ENCODE measurements at regions of chr19 and their contacts with region 1.

Region 1: GRCh38 chr19:52690369-52691214 is 44.3 kb downstream of the ZNF611 start:
- DNase-seq: peak; percentile 95 to 97
- ATAC-seq: peak; percentile 99 to 100 (median 100)
- H3K4me3 ChIP-seq: peak overlapping the region; percentile 58 to 84 (median 66)
- H3K27ac ChIP-seq: peak overlapping the region; percentile 79 to 96 (median 92)
- H3K4me1 ChIP-seq: peaks cover 3 to 23% (median 17%) of the 10 kb centered on the region in 9 donors
- H3K27me3 ChIP-seq: no peaks in the 10 kb centered on the region
- CTCF ChIP-seq: peak; percentile 16 to 65 (median 42)

Region 2: DNA sequence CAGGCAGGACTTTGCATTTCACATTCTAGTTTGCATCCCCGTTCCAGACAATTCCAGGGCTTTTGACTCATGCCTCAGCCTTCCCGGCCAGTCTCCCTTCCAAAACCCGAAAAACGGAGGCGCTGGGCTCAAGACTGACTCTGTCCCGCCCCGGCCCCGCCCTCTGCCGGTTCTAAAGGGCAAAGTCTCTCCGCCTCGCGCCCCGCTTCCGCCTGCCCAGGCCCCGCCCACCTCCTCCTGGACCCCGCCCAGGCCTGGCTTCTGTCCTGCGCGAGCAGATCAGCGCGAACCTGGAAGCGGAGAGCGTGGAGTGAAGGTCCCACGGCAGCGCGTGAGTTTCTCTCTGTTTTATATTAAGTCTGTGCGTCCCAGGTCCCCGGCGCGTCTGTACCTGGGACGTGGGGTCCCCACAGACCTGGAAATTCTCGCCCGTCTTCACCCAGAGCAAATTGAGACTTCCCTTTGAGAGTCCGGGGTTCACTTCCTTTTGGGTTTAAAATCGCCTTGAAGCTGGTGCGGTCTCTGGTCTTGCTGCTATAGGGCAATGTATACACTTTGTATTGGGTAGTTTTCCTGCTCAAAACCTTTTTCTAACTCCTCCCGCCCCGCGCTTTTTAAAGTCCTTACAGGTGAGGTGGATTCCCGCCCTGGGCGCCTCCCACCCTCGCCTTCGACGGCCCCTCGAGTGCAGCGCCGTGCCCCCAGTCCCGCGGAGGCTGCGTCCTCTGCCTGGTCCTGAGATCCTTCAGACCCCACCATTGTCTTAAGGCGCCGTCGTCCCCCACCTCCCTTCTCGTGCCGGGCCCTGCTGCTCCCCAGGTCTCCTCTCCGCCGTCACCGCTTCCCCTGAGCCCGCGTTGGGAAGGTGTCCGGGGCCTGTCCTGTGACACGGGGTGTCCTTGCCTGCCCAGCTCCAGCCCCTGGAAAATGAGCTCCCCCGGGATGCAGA is 89.3 kb before region 1 on chr19:
- intact Hi-C with region 1: loop called in 1 of 10 experiments (anchors 10 kb)
- DNase-seq: peak; percentile 94 to 96
- ATAC-seq: peak; percentile 97 to 99 (median 99)
- H3K4me3 ChIP-seq: peak overlapping the region; percentile 57 to 82 (median 65)
- H3K27ac ChIP-seq: peak overlapping the region; percentile 9 to 84 (median 67)
- H3K4me1 ChIP-seq: peaks cover 5 to 18% (median 12%) of the 10 kb centered on the region in 9 donors
- H3K27me3 ChIP-seq: no peaks in the 10 kb centered on the region
- CTCF ChIP-seq: peak; percentile 9 to 68 (median 52)

Region 3: DNA sequence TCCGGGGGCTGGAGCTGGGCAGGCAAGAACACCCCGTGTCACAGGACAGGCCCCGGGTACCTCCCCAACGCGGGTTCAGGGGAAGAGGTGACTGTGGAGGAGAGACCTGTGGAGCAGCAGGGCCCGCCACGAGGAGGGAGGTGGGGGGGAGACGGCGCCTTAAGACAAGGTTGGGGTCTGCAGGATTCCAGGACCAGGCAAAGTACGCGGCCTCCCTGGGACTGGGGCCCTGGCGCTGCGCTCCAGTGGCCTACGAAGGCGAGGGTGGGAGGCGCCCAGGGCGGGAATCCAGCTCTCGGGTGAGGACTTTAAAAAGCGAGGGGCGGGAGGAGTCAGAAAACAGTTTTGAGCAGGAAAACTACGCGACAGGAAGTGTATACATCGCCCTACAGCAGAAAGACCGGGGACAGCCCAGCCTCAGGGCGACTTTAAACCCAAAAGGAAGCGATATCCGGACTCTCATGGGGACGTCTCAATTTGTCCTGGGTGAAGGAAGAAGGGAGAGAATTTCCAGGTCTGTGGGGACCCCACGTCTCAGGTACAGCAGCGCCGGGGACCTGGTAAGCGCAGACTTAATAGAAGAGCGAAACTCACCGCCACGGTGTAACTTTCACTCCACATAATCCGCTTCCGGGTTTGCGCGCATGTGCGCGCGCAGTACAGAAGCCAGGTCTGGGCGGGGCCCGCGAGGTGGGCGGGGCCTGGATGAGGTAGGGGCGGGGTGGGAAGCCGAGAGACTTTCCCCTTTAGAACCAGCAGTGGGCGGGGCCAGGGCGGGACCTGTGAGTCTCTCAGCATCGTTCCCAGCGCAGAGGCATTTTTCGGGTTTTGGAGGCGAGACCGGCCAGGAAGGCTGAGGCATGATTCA is 52.6 kb before region 1 on chr19 and contains the start of gene ZNF83:
- intact Hi-C with region 1: loop called in 2 of 10 experiments (anchors 5 kb)
- DNase-seq: peak; percentile 98
- ATAC-seq: peak; percentile 99 to 100 (median 99)
- H3K4me3 ChIP-seq: peak within 1 kb of the TSS; percentile 51 to 91 (median 74)
- H3K27ac ChIP-seq: peak within 1 kb of the TSS; percentile 66 to 94 (median 86)
- H3K4me1 ChIP-seq: peaks cover 0 to 23% (median 14%) of the 10 kb centered on the region in 9 donors
- H3K27me3 ChIP-seq: no peaks in the 10 kb centered on the region
- CTCF ChIP-seq: no peak
- total RNA-seq, gene ZNF83: 10.3 to 21.4 (median 16.7) TPM

Region 4: GRCh38 chr19:52722062-52723003 is 31.7 kb after region 1 on chr19:
- intact Hi-C with region 1: no loop called
- DNase-seq: no peak
- ATAC-seq: no peak
- H3K4me3 ChIP-seq: no peak overlapping the region
- H3K27ac ChIP-seq: no peak overlapping the region
- H3K4me1 ChIP-seq: no peaks in the 10 kb centered on the region
- H3K27me3 ChIP-seq: no peaks in the 10 kb centered on the region
- CTCF ChIP-seq: no peak

Region 5: GRCh38 chr19:52734893-52735661 is 44.5 kb after region 1 on chr19 and contains the start of gene ZNF611:
- intact Hi-C with region 1: loop called in 2 of 10 experiments (anchors 2 kb)
- DNase-seq: peak; percentile 98 to 99
- ATAC-seq: peak; percentile 98 to 100 (median 99)
- H3K4me3 ChIP-seq: peak within 1 kb of the TSS; percentile 64 to 92 (median 81)
- H3K27ac ChIP-seq: peak within 1 kb of the TSS; percentile 68 to 97 (median 92)
- H3K4me1 ChIP-seq: peaks cover 0 to 28% (median 13%) of the 10 kb centered on the region in 9 donors
- H3K27me3 ChIP-seq: no peaks in the 10 kb centered on the region
- CTCF ChIP-seq: peak; percentile 48 to 86 (median 74)
- total RNA-seq, gene ZNF611: 7.0 to 9.8 (median 7.7) TPM

Region 6: GRCh38 chr19:53365134-53365898 is 674.7 kb after region 1 on chr19 and contains the start of gene ZNF525:
- intact Hi-C with region 1: loop called in 2 of 10 experiments (anchors 5 kb)
- DNase-seq: peak; percentile 81 to 91
- ATAC-seq: peak; percentile 98 to 100 (median 99)
- H3K4me3 ChIP-seq: peak within 1 kb of the TSS; percentile 49 to 92 (median 72)
- H3K27ac ChIP-seq: peak within 1 kb of the TSS in 9 of 10 donors; percentile 11 to 78 (median 53)
- H3K4me1 ChIP-seq: peaks cover 0 to 14% (median 6%) of the 10 kb centered on the region in 9 donors
- H3K27me3 ChIP-seq: no peaks in the 10 kb centered on the region
- CTCF ChIP-seq: peak in 7 of 9 donors; percentile 7 to 38 (median 27)
- total RNA-seq, gene ZNF525: 2.1 to 4.8 (median 3.7) TPM

Measured in heart right ventricle (tissue), 16 donors.